ENCODE measurements at regions of chr2 and their contacts with region 1.

Region 1: DNA sequence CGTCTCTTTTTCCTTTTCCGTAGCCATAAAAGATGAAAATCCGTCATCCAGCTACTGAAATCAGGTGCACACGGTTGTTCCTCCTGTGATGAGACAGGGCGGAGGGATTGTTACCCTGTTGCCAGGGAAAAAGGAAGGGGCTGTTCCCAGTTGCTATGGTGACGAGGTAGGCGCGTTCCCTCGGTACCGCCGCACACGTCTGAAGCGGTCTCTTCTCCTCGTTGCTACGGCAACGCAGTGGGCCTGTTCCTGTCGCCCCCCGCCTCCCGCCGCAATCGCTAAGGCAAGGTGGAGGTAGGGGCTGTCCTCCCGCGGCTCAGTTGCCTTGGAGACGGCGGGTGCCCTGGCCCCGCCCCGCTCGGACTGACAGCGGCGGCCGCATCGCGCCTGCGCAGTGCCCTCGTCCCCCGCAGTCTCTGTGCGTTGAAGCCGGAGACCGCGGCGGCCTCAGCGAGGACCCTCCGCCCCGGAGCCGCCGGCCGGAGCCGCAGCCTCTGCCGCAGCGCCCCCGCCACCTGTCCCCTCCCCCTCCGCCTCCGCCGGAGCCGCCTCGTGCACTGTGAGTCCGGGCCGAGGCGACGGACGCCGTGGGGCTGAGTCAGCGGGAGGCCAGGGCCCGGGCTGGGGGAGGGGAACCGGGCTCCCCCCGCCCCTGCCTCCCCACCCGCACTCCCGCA is at the start of gene MAPRE3:
- DNase-seq: peak; percentile 95
- H3K4me3 Mint-ChIP-seq: peak within 1 kb of the TSS; percentile 86
- H3K27ac Mint-ChIP-seq: peak within 1 kb of the TSS; percentile 74
- H3K4me1 Mint-ChIP-seq: peaks cover 17% of the 10 kb centered on the region
- H3K27me3 Mint-ChIP-seq: peaks cover 57% of the 10 kb centered on the region
- total RNA-seq, gene MAPRE3: 2.5 and 3.6 TPM in 2 replicates

Region 2: DNA sequence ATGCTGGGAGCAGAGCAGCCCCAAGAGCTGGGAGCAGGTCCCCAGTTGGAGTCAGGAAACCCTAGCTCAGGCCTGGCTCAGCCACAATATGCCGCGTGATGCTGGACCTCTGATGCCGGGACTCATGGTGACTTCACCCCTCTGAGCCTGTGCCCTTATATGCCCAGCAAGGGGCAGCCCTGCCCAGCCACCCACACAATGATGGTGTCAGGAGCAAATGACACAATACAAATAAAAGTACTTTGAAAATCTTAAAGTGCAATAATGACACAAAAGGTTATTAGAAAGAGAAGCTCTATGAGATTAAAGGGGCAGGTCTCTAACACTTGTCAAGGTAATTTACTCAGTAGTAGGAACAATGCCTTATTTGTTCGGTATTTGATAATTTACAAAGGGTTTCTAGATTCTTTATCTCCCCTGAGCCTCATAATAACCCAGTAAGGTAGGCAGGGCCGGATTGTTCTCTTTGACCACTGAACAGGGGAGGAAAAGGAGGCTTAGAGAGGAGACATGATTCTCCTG is 969.8 kb before region 1 on chr2:
- intact Hi-C with region 1: no loop called
- DNase-seq: no peak
- H3K4me3 Mint-ChIP-seq: no peak overlapping the region
- H3K27ac Mint-ChIP-seq: no peak overlapping the region
- H3K4me1 Mint-ChIP-seq: peaks cover 6% of the 10 kb centered on the region
- H3K27me3 Mint-ChIP-seq: peaks cover 8% of the 10 kb centered on the region

Region 3: DNA sequence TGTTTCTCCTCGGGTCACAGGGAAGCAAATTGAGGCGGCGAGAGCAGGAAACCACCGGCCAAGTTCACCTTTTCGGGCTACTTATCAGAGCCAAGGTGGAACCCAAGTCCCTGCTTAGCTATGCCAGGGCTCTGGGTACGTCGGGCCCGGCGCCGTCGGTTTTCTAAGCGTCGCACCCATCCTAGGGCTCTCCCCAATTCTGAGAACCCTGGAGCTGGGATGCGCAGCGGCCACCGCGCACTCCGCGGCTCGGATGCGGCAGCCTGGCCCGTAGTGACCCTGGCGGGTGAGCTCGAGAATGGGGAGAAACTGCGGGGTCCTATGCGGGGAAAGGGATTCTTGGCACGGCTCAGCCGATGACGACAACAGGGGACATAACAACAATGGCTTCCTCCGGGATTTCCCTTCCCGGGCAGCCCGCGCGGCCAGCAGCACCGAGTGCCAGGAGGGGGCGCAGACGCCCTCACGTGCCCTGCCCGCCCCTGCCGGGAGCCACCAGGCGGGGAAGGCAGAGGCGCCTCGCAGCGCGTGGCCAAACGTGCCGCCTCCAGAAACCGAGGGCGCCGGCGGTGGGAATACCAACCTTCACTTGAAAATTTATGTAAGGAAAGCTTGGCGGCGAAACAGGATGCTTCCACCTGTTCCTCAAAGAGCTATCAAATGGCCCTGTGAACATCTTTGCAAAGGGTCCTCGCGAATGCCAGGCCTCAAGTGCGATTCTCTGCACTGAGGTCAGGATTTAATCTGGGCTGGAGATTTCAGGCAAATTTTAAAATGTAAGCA is 294.6 kb after region 1 on chr2:
- intact Hi-C with region 1: loop called (anchors 1 kb)
- DNase-seq: peak; percentile 83
- H3K4me3 Mint-ChIP-seq: peak overlapping the region; percentile 74
- H3K27ac Mint-ChIP-seq: no peak overlapping the region
- H3K4me1 Mint-ChIP-seq: peaks cover 25% of the 10 kb centered on the region
- H3K27me3 Mint-ChIP-seq: peaks cover 44% of the 10 kb centered on the region